ENCODE measurements at regions of chr1 and their contacts with region 1.

Region 1: DNA sequence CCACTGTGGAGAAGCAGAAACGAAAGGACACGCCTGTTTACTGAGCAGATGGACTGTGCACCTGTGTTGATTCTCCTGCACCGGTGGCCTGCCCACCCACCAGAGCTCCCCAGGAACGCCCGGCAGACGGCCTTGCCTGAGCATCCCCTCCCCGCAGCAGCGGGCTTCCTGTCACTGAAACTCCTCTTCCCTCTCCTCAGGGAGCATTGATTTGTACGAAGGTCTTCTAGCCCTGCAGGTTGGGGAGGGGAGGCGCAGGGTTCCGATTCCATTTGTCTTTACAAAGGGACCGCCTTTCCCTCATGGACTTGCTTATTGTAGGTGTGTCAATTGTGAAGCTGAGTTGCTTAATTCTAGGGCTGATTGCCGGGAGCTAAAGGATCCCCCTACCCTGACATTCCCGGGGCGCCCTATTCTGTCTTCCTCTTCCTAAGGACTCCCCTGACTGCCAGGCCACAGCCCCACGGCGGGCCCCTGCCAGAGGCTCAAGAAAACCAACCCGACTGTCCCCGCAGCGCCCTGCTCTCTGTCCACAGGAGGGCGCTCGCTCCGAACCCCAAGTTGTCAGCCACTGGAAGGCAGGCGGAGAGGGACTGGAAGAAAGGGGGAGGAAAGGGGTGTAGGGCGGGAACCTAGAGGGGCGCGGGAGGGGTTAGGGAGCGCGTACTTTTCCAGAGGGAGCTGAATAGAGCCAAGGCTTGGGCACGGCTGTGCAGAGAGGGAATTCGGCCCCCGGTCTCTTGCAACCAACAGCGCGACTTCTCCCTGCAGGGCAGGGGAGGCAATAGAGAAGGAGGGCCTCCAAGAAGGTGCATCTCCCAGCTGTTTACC is 2.8 kb downstream of the S100A6 start:
- DNase-seq: peak; percentile 86
- ATAC-seq: peak; percentile 19
- H3K4me3 Mint-ChIP-seq: peak overlapping the region; percentile 95
- H3K27ac Mint-ChIP-seq: peak overlapping the region; percentile 96
- H3K4me1 Mint-ChIP-seq: peaks cover 61% of the 10 kb centered on the region
- H3K27me3 Mint-ChIP-seq: no peaks in the 10 kb centered on the region
- CTCF ChIP-seq: peak; percentile 87

Region 2: GRCh38 chr1:153520230-153520629 is 12.8 kb before region 1 on chr1:
- CTCF ChIA-PET with region 1: interaction called, 39 read pairs
- POLR2A ChIA-PET with region 1: interaction called, 10 read pairs
- intact Hi-C with region 1: no loop called
- DNase-seq: no peak
- ATAC-seq: no peak
- H3K4me3 Mint-ChIP-seq: no peak overlapping the region
- H3K27ac Mint-ChIP-seq: no peak overlapping the region
- H3K4me1 Mint-ChIP-seq: peaks cover 7% of the 10 kb centered on the region
- H3K27me3 Mint-ChIP-seq: no peaks in the 10 kb centered on the region
- CTCF ChIP-seq: no peak

Region 3: GRCh38 chr1:153550827-153551500 is 18.0 kb after region 1 on chr1:
- CTCF ChIA-PET with region 1: interaction called, 49 read pairs
- POLR2A ChIA-PET with region 1: interaction called, 97 read pairs
- intact Hi-C with region 1: no loop called
- DNase-seq: no peak
- ATAC-seq: no peak
- H3K4me3 Mint-ChIP-seq: no peak overlapping the region
- H3K27ac Mint-ChIP-seq: no peak overlapping the region
- H3K4me1 Mint-ChIP-seq: peaks cover 12% of the 10 kb centered on the region
- H3K27me3 Mint-ChIP-seq: no peaks in the 10 kb centered on the region
- CTCF ChIP-seq: no peak

Region 4: DNA sequence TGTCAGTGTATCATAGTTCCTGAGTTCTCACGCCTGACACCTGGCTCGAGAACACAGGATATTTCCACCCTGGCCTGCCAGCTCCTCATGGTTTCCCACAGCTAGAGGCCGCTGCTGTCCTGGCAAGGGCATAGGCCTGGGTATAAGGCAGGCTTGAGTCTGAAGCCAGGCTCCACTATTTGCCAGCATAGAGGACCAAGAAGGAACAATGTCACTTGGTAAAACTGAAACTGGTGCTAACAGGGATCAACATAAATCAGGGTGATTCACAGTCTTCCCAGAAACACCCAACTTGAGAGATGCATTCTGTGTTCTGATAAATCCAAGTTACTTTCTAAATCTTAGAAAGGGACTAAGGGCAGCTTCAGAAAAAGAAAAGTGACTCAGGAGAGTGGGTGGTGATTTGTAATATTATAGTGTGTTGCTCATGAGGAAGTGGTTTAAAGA is 39.6 kb after region 1 on chr1:
- CTCF ChIA-PET with region 1: interaction called, 191 read pairs
- POLR2A ChIA-PET with region 1: interaction called, 80 read pairs
- intact Hi-C with region 1: loop called (anchors 2 kb)
- DNase-seq: peak; percentile 78
- ATAC-seq: peak; percentile 79
- H3K4me3 Mint-ChIP-seq: no peak overlapping the region
- H3K27ac Mint-ChIP-seq: peak overlapping the region; percentile 69
- H3K4me1 Mint-ChIP-seq: peaks cover 34% of the 10 kb centered on the region
- H3K27me3 Mint-ChIP-seq: peaks cover 8% of the 10 kb centered on the region
- CTCF ChIP-seq: peak; percentile 67

Region 5: GRCh38 chr1:153617675-153618074 is 84.7 kb after region 1 on chr1:
- CTCF ChIA-PET with region 1: interaction called, 24 read pairs
- POLR2A ChIA-PET with region 1: interaction called, 4 read pairs
- intact Hi-C with region 1: no loop called
- DNase-seq: peak; percentile 87
- ATAC-seq: peak; percentile 96
- H3K4me3 Mint-ChIP-seq: no peak overlapping the region
- H3K27ac Mint-ChIP-seq: no peak overlapping the region
- H3K4me1 Mint-ChIP-seq: peaks cover 5% of the 10 kb centered on the region
- H3K27me3 Mint-ChIP-seq: no peaks in the 10 kb centered on the region
- CTCF ChIP-seq: peak; percentile 73

Region 6: GRCh38 chr1:153633716-153634665 is 101.0 kb after region 1 on chr1 and contains the start of gene CHTOP:
- CTCF ChIA-PET with region 1: interaction called, 17 read pairs
- POLR2A ChIA-PET with region 1: interaction called, 20 read pairs
- intact Hi-C with region 1: no loop called
- DNase-seq: peak; percentile 98
- ATAC-seq: peak; percentile 95
- H3K4me3 Mint-ChIP-seq: peak within 1 kb of the TSS; percentile 100
- H3K27ac Mint-ChIP-seq: peak within 1 kb of the TSS; percentile 99
- H3K4me1 Mint-ChIP-seq: peaks cover 45% of the 10 kb centered on the region
- H3K27me3 Mint-ChIP-seq: no peaks in the 10 kb centered on the region
- CTCF ChIP-seq: no peak
- total RNA-seq, gene CHTOP: 76.8 to 83.2 TPM